ENCODE measurements at regions of chr4 and their contacts with region 1.

Region 1: GRCh38 chr4:152535903-152536544 is at the start of gene FBXW7:
- DNase-seq: peak; percentile 98 to 100 (median 100)
- ATAC-seq: peak; percentile 91
- H3K4me3 ChIP-seq: peak within 1 kb of the TSS; percentile 87
- H3K4me3 Mint-ChIP-seq: peak within 1 kb of the TSS; percentile 90 to 99 (median 97)
- H3K27ac ChIP-seq: peak within 1 kb of the TSS; percentile 90
- H3K27ac Mint-ChIP-seq: peak within 1 kb of the TSS; percentile 93 to 99 (median 97)
- H3K4me1 ChIP-seq: peaks cover 29 to 53% of the 10 kb centered on the region in 2 donors
- H3K4me1 Mint-ChIP-seq: peaks cover 43 to 80% (median 65%) of the 10 kb centered on the region in 7 donors
- H3K27me3 ChIP-seq: no peaks in the 10 kb centered on the region
- H3K27me3 Mint-ChIP-seq: no peaks in the 10 kb centered on the region
- total RNA-seq, gene FBXW7: 57.5 to 139 (median 116) TPM

Region 2: GRCh38 chr4:151099229-151099975 is 1436.6 kb before region 1 on chr4 and contains the start of gene RPS3A:
- CTCF ChIA-PET with region 1: no interaction called
- POLR2A ChIA-PET with region 1: interaction called, 3 read pairs
- intact Hi-C with region 1: loop called (anchors 1 kb)
- DNase-seq: peak; percentile 95 to 100 (median 99)
- ATAC-seq: peak; percentile 97
- H3K4me3 ChIP-seq: peak within 1 kb of the TSS; percentile 96
- H3K4me3 Mint-ChIP-seq: peak within 1 kb of the TSS; percentile 89 to 99 (median 96)
- H3K27ac ChIP-seq: peak within 1 kb of the TSS; percentile 89
- H3K27ac Mint-ChIP-seq: peak within 1 kb of the TSS; percentile 97 to 99 (median 98)
- H3K4me1 ChIP-seq: peaks cover 14 to 18% of the 10 kb centered on the region in 2 donors
- H3K4me1 Mint-ChIP-seq: peaks cover 24 to 43% (median 28%) of the 10 kb centered on the region in 7 donors
- H3K27me3 ChIP-seq: no peaks in the 10 kb centered on the region
- H3K27me3 Mint-ChIP-seq: peaks cover 0 to 4% (median 0%) of the 10 kb centered on the region in 5 donors
- total RNA-seq, gene RPS3A: 1,723 to 5,358 (median 3,483) TPM

Region 3: GRCh38 chr4:152304220-152304619 is 231.8 kb before region 1 on chr4:
- CTCF ChIA-PET with region 1: no interaction called
- POLR2A ChIA-PET with region 1: no interaction called
- intact Hi-C with region 1: no loop called
- DNase-seq: no peak
- ATAC-seq: no peak
- H3K4me3 ChIP-seq: no peak overlapping the region
- H3K4me3 Mint-ChIP-seq: no peak overlapping the region
- H3K27ac ChIP-seq: no peak overlapping the region
- H3K27ac Mint-ChIP-seq: no peak overlapping the region
- H3K4me1 ChIP-seq: no peaks in the 10 kb centered on the region
- H3K4me1 Mint-ChIP-seq: no peaks in the 10 kb centered on the region
- H3K27me3 ChIP-seq: no peaks in the 10 kb centered on the region
- H3K27me3 Mint-ChIP-seq: peaks cover 0 to 9% (median 0%) of the 10 kb centered on the region in 5 donors

Region 4: GRCh38 chr4:152454398-152455011 is 81.5 kb before region 1 on chr4:
- CTCF ChIA-PET with region 1: no interaction called
- POLR2A ChIA-PET with region 1: interaction called, 3 read pairs
- intact Hi-C with region 1: loop called in 1 of 2 experiments (anchors 2 kb)
- DNase-seq: peak in 2 of 9 donors; percentile 6 to 7
- ATAC-seq: no peak
- H3K4me3 ChIP-seq: no peak overlapping the region
- H3K4me3 Mint-ChIP-seq: no peak overlapping the region
- H3K27ac ChIP-seq: no peak overlapping the region
- H3K27ac Mint-ChIP-seq: no peak overlapping the region
- H3K4me1 ChIP-seq: peaks cover 5 to 9% of the 10 kb centered on the region in 2 donors
- H3K4me1 Mint-ChIP-seq: peaks cover 30 to 53% (median 41%) of the 10 kb centered on the region in 7 donors
- H3K27me3 ChIP-seq: no peaks in the 10 kb centered on the region
- H3K27me3 Mint-ChIP-seq: no peaks in the 10 kb centered on the region

Region 5: DNA sequence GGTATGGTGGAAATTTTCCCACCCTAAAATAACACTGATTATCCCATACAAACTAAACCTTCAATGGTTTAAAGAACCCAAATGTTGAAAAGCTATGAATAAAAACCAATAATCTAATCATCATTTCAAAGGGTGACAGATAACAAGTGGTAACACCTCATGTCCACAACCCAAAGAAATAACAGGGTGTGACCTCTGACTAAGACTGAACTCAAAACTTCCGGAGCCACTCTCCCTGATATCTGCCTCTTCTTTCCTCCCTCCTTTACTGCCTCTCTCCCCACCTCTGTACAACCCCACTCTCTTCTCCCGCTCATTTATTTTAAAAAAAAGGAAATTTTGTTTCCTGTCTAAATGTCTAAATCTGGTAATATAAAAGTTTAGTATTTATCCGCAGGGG is 11.6 kb before region 1 on chr4:
- CTCF ChIA-PET with region 1: no interaction called
- POLR2A ChIA-PET with region 1: interaction called, 5 read pairs
- intact Hi-C with region 1: loop called (anchors 1 kb)
- DNase-seq: no peak
- ATAC-seq: peak; percentile 67
- H3K4me3 ChIP-seq: no peak overlapping the region
- H3K4me3 Mint-ChIP-seq: peak overlapping the region in 2 of 10 donors; percentile 2 to 11
- H3K27ac ChIP-seq: no peak overlapping the region
- H3K27ac Mint-ChIP-seq: peak overlapping the region in 1 of 9 donors; percentile 60
- H3K4me1 ChIP-seq: peaks cover 0 to 27% of the 10 kb centered on the region in 2 donors
- H3K4me1 Mint-ChIP-seq: peaks cover 43 to 88% (median 71%) of the 10 kb centered on the region in 7 donors
- H3K27me3 ChIP-seq: no peaks in the 10 kb centered on the region
- H3K27me3 Mint-ChIP-seq: no peaks in the 10 kb centered on the region

Region 6: DNA sequence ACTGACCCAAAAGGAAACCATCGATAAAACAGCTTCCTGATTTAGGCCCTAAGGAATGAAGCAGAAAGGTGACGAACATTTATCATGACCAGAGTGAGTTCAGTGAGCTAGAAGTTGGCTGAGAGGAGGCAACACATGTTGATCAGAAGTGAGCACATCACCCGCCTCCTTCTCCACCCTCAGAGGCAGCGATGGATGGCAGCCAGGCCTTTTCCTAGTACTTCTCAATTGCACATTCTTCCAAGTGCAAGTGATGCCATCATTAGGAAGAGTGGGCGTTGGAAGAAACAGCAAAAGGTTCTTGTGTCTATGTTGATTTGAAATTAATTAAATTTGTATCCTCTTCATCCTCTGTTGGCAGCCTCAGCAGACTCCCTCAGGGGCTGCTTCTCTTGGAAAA is 92.1 kb after region 1 on chr4:
- CTCF ChIA-PET with region 1: no interaction called
- POLR2A ChIA-PET with region 1: no interaction called
- intact Hi-C with region 1: loop called in 1 of 2 experiments (anchors 5 kb)
- DNase-seq: no peak
- ATAC-seq: no peak
- H3K4me3 ChIP-seq: no peak overlapping the region
- H3K4me3 Mint-ChIP-seq: no peak overlapping the region
- H3K27ac ChIP-seq: no peak overlapping the region
- H3K27ac Mint-ChIP-seq: peak overlapping the region in 2 of 9 donors; percentile 8 to 56
- H3K4me1 ChIP-seq: no peaks in the 10 kb centered on the region
- H3K4me1 Mint-ChIP-seq: peaks cover 0 to 6% (median 0%) of the 10 kb centered on the region in 7 donors
- H3K27me3 ChIP-seq: no peaks in the 10 kb centered on the region
- H3K27me3 Mint-ChIP-seq: no peaks in the 10 kb centered on the region

Region 7: GRCh38 chr4:153115322-153116290 is 579.6 kb after region 1 on chr4:
- CTCF ChIA-PET with region 1: no interaction called
- POLR2A ChIA-PET with region 1: no interaction called
- intact Hi-C with region 1: loop called (anchors 1 to 10 kb)
- DNase-seq: peak in 8 of 9 donors; percentile 64 to 93 (median 89)
- ATAC-seq: peak; percentile 65
- H3K4me3 ChIP-seq: peak overlapping the region; percentile 46
- H3K4me3 Mint-ChIP-seq: peak overlapping the region in 2 of 10 donors; percentile 70 to 79
- H3K27ac ChIP-seq: peak overlapping the region; percentile 84
- H3K27ac Mint-ChIP-seq: no peak overlapping the region
- H3K4me1 ChIP-seq: peaks cover 43 to 62% of the 10 kb centered on the region in 2 donors
- H3K4me1 Mint-ChIP-seq: peaks cover 0 to 26% (median 11%) of the 10 kb centered on the region in 7 donors
- H3K27me3 ChIP-seq: no peaks in the 10 kb centered on the region
- H3K27me3 Mint-ChIP-seq: peaks cover 0 to 9% (median 0%) of the 10 kb centered on the region in 5 donors